Naive thymus-derived CD4-positive, alpha-beta T cell (primary cell): ENCODE measurements at regions of chr16 and their contacts with region 1.

Region 1: DNA sequence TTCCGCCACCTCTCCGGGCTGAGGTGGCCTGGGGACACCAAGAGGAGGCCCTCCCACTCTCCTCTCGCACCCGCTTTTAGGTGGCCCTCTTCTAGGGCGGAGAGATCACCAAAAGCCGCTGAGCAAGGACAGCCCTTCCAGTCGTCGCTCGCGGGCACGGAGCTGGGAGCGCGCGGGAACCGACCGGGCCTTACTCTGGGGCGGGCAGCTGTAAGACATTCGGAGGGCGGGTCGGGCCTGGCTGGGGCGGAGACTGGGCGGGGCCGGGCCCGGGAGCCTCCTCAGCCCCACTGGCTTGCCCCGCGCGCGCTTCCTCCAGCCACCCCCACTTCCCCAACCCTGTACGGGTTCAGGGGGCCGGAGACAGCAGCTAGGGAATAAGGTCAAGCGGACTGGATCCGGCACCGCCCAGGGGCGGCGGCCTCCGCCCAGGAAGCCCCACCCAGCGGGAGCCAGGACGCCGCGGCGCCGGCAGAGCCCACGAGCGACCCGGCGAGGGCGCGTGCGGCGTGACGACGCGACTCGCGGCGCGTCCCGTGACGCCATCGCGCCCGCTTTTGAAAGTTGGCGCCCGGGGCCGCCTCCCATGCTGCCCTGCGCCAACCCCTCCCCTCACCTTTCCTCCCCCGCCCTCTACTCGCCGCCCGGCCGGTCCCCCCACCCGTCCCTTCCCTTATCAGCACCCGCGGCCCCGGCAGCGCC is 351 bp upstream of the CTCF start:
- DNase-seq: peak; percentile 93 to 98 (median 96)
- ATAC-seq: peak; percentile 86
- H3K4me3 ChIP-seq: peak overlapping the region; percentile 72
- H3K4me3 Mint-ChIP-seq: peak overlapping the region; percentile 85 to 93 (median 90)
- H3K27ac ChIP-seq: peak overlapping the region; percentile 98
- H3K27ac Mint-ChIP-seq: peak overlapping the region; percentile 90 to 99 (median 96)
- H3K4me1 ChIP-seq: peaks cover 30 to 36% of the 10 kb centered on the region in 2 donors
- H3K4me1 Mint-ChIP-seq: peaks cover 28 to 64% (median 46%) of the 10 kb centered on the region in 7 donors
- H3K27me3 ChIP-seq: no peaks in the 10 kb centered on the region
- H3K27me3 Mint-ChIP-seq: no peaks in the 10 kb centered on the region

Region 2: DNA sequence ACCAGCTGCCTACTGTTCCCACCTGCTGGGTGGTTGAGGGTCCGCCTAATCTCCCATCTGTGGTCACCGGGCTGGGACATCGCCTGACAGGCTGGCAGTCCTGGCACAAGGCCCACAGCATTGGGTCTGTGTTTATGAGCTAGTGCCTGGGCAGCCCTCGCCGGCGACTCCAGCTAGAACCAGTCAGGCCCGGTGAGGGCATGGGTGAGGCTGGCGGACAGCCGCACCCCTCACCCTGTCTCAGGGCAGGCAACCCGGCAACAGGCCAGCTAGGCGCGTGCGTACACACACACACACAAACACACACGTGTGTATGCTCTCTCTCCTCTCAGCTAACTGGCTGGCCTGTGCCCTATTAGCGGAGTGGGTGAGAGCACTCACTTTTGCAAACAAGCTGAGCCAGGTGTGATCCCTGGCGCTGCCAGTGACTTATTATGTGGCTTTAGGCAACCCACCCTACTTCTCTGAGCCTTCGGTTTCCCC is 120.7 kb before region 1 on chr16:
- CTCF ChIA-PET with region 1: no interaction called
- POLR2A ChIA-PET with region 1: no interaction called
- intact Hi-C with region 1: no loop called
- DNase-seq: no peak
- ATAC-seq: no peak
- H3K4me3 ChIP-seq: no peak overlapping the region
- H3K4me3 Mint-ChIP-seq: no peak overlapping the region
- H3K27ac ChIP-seq: no peak overlapping the region
- H3K27ac Mint-ChIP-seq: no peak overlapping the region
- H3K4me1 ChIP-seq: no peaks in the 10 kb centered on the region
- H3K4me1 Mint-ChIP-seq: peaks cover 0 to 3% (median 0%) of the 10 kb centered on the region in 7 donors
- H3K27me3 ChIP-seq: no peaks in the 10 kb centered on the region
- H3K27me3 Mint-ChIP-seq: no peaks in the 10 kb centered on the region

Region 3: DNA sequence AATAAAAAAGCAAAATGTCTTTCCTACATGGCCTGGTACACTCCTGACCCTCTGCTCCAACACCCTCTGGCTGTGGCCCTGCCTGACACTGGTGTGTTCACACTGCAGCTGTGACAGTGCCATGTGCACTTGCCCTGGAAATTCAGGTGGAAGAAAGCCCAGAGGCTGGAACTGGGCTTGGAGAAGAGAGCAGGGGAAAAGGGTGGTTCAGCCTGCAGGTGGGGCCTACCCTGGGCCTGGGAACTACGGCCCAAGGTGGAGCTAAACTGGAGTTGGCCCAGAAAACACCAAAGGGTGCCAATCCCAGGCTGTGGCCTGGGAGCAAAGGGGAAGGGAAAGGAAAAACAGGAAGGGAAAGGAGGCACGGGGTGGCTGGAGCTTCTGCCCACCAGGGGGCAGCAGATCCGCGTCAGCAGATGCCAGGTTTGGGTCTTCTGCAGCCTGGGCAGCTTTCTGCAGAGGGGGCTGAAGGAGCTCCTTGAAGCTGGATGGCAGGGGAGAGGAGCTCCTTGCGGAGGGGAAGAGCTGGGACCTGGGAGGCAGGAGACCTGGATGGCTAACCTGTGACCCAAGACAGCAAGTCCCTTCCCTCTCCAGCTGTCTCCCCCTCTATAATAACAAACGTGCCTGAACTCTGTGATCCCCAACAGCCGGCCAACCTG is 15.1 kb before region 1 on chr16:
- CTCF ChIA-PET with region 1: interaction called, 256 read pairs
- POLR2A ChIA-PET with region 1: interaction called, 581 read pairs
- intact Hi-C with region 1: loop called (anchors 1 kb)
- DNase-seq: peak; percentile 57 to 78 (median 70)
- ATAC-seq: peak; percentile 55
- H3K4me3 ChIP-seq: peak overlapping the region; percentile 56
- H3K4me3 Mint-ChIP-seq: peak overlapping the region; percentile 75 to 92 (median 86)
- H3K27ac ChIP-seq: peak overlapping the region; percentile 70
- H3K27ac Mint-ChIP-seq: peak overlapping the region; percentile 59 to 99 (median 97)
- H3K4me1 ChIP-seq: peaks cover 19 to 40% of the 10 kb centered on the region in 2 donors
- H3K4me1 Mint-ChIP-seq: peaks cover 25 to 56% (median 51%) of the 10 kb centered on the region in 7 donors
- H3K27me3 ChIP-seq: no peaks in the 10 kb centered on the region
- H3K27me3 Mint-ChIP-seq: no peaks in the 10 kb centered on the region

Region 4: GRCh38 chr16:67660564-67661028 is 98.6 kb after region 1 on chr16 and contains the start of gene PARD6A:
- CTCF ChIA-PET with region 1: interaction called, 6 read pairs
- POLR2A ChIA-PET with region 1: interaction called, 48 read pairs
- intact Hi-C with region 1: loop called (anchors 1 kb)
- DNase-seq: peak; percentile 81 to 95 (median 93)
- ATAC-seq: peak; percentile 89
- H3K4me3 ChIP-seq: peak within 1 kb of the TSS; percentile 99
- H3K4me3 Mint-ChIP-seq: peak within 1 kb of the TSS; percentile 90 to 97 (median 94)
- H3K27ac ChIP-seq: peak within 1 kb of the TSS; percentile 97
- H3K27ac Mint-ChIP-seq: peak within 1 kb of the TSS; percentile 84 to 98 (median 97)
- H3K4me1 ChIP-seq: peaks cover 11 to 17% of the 10 kb centered on the region in 2 donors
- H3K4me1 Mint-ChIP-seq: peaks cover 15 to 40% (median 22%) of the 10 kb centered on the region in 7 donors
- H3K27me3 ChIP-seq: no peaks in the 10 kb centered on the region
- H3K27me3 Mint-ChIP-seq: no peaks in the 10 kb centered on the region
- total RNA-seq, gene PARD6A: 4.5 to 11.2 (median 4.7) TPM

Region 5: GRCh38 chr16:67719048-67719777 is 157.2 kb after region 1 on chr16 and contains the start of gene GFOD2:
- CTCF ChIA-PET with region 1: interaction called, 3 read pairs
- POLR2A ChIA-PET with region 1: interaction called, 3 read pairs
- intact Hi-C with region 1: loop called in 1 of 2 experiments (anchors 1 kb)
- DNase-seq: peak; percentile 94 to 100 (median 96)
- ATAC-seq: peak; percentile 96
- H3K4me3 ChIP-seq: peak within 1 kb of the TSS; percentile 95
- H3K4me3 Mint-ChIP-seq: peak within 1 kb of the TSS; percentile 90 to 99 (median 94)
- H3K27ac ChIP-seq: peak within 1 kb of the TSS; percentile 88
- H3K27ac Mint-ChIP-seq: peak within 1 kb of the TSS; percentile 91 to 99 (median 98)
- H3K4me1 ChIP-seq: peaks cover 15 to 16% of the 10 kb centered on the region in 2 donors
- H3K4me1 Mint-ChIP-seq: peaks cover 19 to 51% (median 39%) of the 10 kb centered on the region in 7 donors
- H3K27me3 ChIP-seq: no peaks in the 10 kb centered on the region
- H3K27me3 Mint-ChIP-seq: no peaks in the 10 kb centered on the region
- total RNA-seq, gene GFOD2: 6.3 to 13.4 (median 11.4) TPM

Region 6: GRCh38 chr16:67731753-67732095 is 169.7 kb after region 1 on chr16:
- CTCF ChIA-PET with region 1: no interaction called
- POLR2A ChIA-PET with region 1: no interaction called
- intact Hi-C with region 1: no loop called
- DNase-seq: no peak
- ATAC-seq: no peak
- H3K4me3 ChIP-seq: no peak overlapping the region
- H3K4me3 Mint-ChIP-seq: no peak overlapping the region
- H3K27ac ChIP-seq: no peak overlapping the region
- H3K27ac Mint-ChIP-seq: peak overlapping the region in 2 of 9 donors; percentile 38
- H3K4me1 ChIP-seq: no peaks in the 10 kb centered on the region
- H3K4me1 Mint-ChIP-seq: peaks cover 0 to 2% (median 0%) of the 10 kb centered on the region in 7 donors
- H3K27me3 ChIP-seq: no peaks in the 10 kb centered on the region
- H3K27me3 Mint-ChIP-seq: no peaks in the 10 kb centered on the region

Region 7: DNA sequence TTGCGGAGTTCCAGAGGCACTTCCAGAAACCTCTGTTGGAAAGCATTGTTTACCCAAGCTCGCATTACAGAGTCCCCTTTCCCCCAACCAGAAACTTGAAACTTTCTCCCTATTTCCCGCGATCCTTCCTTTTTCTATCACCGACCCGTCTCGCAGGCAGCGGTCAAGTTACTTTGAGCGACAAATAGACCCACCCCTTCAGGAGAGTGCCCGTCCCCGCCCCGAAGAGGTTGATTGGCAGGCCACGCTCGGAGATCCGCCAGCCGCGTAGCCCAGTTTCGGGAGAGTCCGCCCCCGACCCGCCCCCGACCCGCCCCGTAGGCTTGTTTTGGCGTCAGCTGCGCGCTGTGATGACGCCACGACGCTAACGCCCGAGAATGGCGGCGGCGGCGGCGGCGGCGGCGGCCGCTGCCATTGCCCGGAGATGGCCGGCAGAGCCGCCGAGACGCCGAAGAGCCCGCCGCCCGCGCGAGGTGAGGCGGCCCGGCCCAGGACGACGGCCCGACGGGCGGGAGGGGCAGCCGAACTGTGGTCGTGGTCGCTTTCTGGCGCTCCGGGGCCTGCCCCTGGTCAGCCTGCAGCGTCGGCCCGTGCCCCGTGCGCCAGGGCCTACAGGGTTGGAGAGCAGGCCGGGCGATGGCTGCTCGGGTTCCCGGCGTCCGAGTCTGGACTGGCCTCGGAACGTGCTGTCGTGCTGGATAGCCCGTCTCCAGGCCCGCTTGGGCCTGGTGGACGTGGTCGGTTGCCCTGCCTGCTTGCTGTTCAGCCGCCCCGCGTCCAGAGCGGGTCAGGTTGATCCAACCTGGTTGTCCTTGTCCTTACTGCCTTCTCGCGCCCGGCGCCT is 331.1 kb after region 1 on chr16 and contains the start of gene PSKH1:
- CTCF ChIA-PET with region 1: no interaction called
- POLR2A ChIA-PET with region 1: no interaction called
- intact Hi-C with region 1: loop called (anchors 1 kb)
- DNase-seq: peak; percentile 77 to 92 (median 84)
- ATAC-seq: peak; percentile 99
- H3K4me3 ChIP-seq: peak within 1 kb of the TSS; percentile 89
- H3K4me3 Mint-ChIP-seq: peak within 1 kb of the TSS; percentile 86 to 97 (median 94)
- H3K27ac ChIP-seq: peak within 1 kb of the TSS; percentile 94
- H3K27ac Mint-ChIP-seq: peak within 1 kb of the TSS; percentile 85 to 98 (median 97)
- H3K4me1 ChIP-seq: peaks cover 12 to 15% of the 10 kb centered on the region in 2 donors
- H3K4me1 Mint-ChIP-seq: peaks cover 22 to 48% (median 35%) of the 10 kb centered on the region in 7 donors
- H3K27me3 ChIP-seq: no peaks in the 10 kb centered on the region
- H3K27me3 Mint-ChIP-seq: no peaks in the 10 kb centered on the region
- total RNA-seq, gene PSKH1: 18.0 to 28.5 (median 23.3) TPM

Region 8: GRCh38 chr16:68843482-68844210 is 1281.7 kb after region 1 on chr16 and contains the start of gene TANGO6:
- CTCF ChIA-PET with region 1: no interaction called
- POLR2A ChIA-PET with region 1: no interaction called
- intact Hi-C with region 1: loop called in 1 of 2 experiments (anchors 5 kb)
- DNase-seq: peak; percentile 83 to 94 (median 89)
- ATAC-seq: peak; percentile 98
- H3K4me3 ChIP-seq: peak within 1 kb of the TSS; percentile 86
- H3K4me3 Mint-ChIP-seq: peak within 1 kb of the TSS; percentile 81 to 99 (median 88)
- H3K27ac ChIP-seq: peak within 1 kb of the TSS; percentile 85
- H3K27ac Mint-ChIP-seq: peak within 1 kb of the TSS; percentile 69 to 97 (median 90)
- H3K4me1 ChIP-seq: peaks cover 7 to 15% of the 10 kb centered on the region in 2 donors
- H3K4me1 Mint-ChIP-seq: peaks cover 20 to 41% (median 30%) of the 10 kb centered on the region in 7 donors
- H3K27me3 ChIP-seq: no peaks in the 10 kb centered on the region
- H3K27me3 Mint-ChIP-seq: no peaks in the 10 kb centered on the region
- total RNA-seq, gene TANGO6: 23.9 to 40.4 (median 36.6) TPM

Region 9: GRCh38 chr16:69424053-69424934 is 1862.3 kb after region 1 on chr16 and contains the start of gene CYB5B:
- CTCF ChIA-PET with region 1: no interaction called
- POLR2A ChIA-PET with region 1: no interaction called
- intact Hi-C with region 1: no loop called
- DNase-seq: peak; percentile 72 to 98 (median 96)
- ATAC-seq: peak; percentile 98
- H3K4me3 ChIP-seq: peak within 1 kb of the TSS; percentile 84
- H3K4me3 Mint-ChIP-seq: peak within 1 kb of the TSS; percentile 92 to 99 (median 97)
- H3K27ac ChIP-seq: peak within 1 kb of the TSS; percentile 83
- H3K27ac Mint-ChIP-seq: peak within 1 kb of the TSS; percentile 89 to 98 (median 93)
- H3K4me1 ChIP-seq: peaks cover 0 to 13% of the 10 kb centered on the region in 2 donors
- H3K4me1 Mint-ChIP-seq: peaks cover 12 to 49% (median 37%) of the 10 kb centered on the region in 7 donors
- H3K27me3 ChIP-seq: no peaks in the 10 kb centered on the region
- H3K27me3 Mint-ChIP-seq: no peaks in the 10 kb centered on the region
- total RNA-seq, gene CYB5B: 29.6 to 148 (median 48.2) TPM